Lower lobe of right lung (tissue), 2 donors: ENCODE measurements at regions of chr18 and their contacts with region 1.

Region 1: DNA sequence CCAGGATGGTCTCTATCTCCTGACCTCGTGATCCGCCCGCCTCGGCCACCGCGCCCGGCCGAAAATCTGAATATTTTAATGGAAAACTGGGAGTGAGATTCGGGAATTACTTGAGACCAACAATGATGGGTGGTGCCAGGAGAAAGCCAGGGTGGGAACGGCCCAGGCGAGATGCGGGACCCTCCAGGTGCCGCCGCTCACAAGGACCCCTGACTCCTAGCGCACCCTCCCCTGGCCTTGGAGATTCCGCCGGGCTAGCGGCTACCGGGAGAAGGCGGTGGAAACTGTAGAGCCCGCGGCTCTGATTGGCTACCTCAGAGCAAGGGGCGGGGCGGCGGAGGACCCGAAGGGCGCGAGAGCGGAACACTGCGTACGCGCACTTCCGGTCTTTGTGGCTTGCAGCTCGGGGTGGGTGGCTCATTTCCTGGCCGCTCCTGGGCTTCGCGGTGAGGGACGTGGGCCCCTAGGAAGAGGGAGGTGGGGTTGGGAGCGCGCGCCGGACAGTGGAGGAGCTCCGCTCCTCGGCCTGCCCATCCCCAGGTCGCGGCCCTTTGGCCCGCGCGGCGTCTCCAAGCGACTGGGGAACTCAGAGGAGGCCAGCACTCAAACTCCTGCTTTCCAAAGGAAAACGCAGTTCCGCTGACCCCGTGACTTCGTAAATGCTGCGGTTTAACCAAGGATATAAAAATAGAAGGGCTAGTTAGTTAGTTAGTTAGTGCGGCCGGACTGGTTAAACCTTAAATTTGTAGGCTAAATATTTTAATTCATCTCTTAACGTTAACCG is at the start of gene ZNF397:
- DNase-seq: peak; percentile 99
- ATAC-seq: peak; percentile 100
- H3K4me3 ChIP-seq: peak within 1 kb of the TSS; percentile 71
- H3K27ac ChIP-seq: peak within 1 kb of the TSS; percentile 97
- H3K4me1 ChIP-seq: peaks cover 9% of the 10 kb centered on the region
- H3K27me3 ChIP-seq: no peaks in the 10 kb centered on the region
- CTCF ChIP-seq: no peak
- total RNA-seq, gene ZNF397: 33.1 TPM

Region 2: GRCh38 chr18:35071819-35072247 is 169.0 kb before region 1 on chr18:
- intact Hi-C with region 1: no loop called
- DNase-seq: no peak
- ATAC-seq: peak; percentile 31 to 35
- H3K4me3 ChIP-seq: no peak overlapping the region
- H3K27ac ChIP-seq: peak overlapping the region; percentile 7
- H3K4me1 ChIP-seq: peaks cover 37% of the 10 kb centered on the region
- H3K27me3 ChIP-seq: no peaks in the 10 kb centered on the region
- CTCF ChIP-seq: no peak

Region 3: GRCh38 chr18:35343936-35344735 is 103.3 kb after region 1 on chr18 and contains the start of gene ZNF24:
- intact Hi-C with region 1: loop called (anchors 10 kb)
- DNase-seq: peak; percentile 98
- ATAC-seq: peak; percentile 99
- H3K4me3 ChIP-seq: peak within 1 kb of the TSS; percentile 93
- H3K27ac ChIP-seq: peak within 1 kb of the TSS; percentile 100
- H3K4me1 ChIP-seq: peaks cover 57% of the 10 kb centered on the region
- H3K27me3 ChIP-seq: no peaks in the 10 kb centered on the region
- CTCF ChIP-seq: no peak
- total RNA-seq, gene ZNF24: 51.8 TPM

Region 4: GRCh38 chr18:35624146-35624545 is 383.3 kb after region 1 on chr18:
- intact Hi-C with region 1: no loop called
- DNase-seq: no peak
- ATAC-seq: no peak
- H3K4me3 ChIP-seq: no peak overlapping the region
- H3K27ac ChIP-seq: no peak overlapping the region
- H3K4me1 ChIP-seq: peaks cover 3% of the 10 kb centered on the region
- H3K27me3 ChIP-seq: no peaks in the 10 kb centered on the region
- CTCF ChIP-seq: no peak